Common myeloid progenitor, CD34-positive (primary cell): ENCODE measurements at regions of chr4 and their contacts with region 1.

Region 1: DNA sequence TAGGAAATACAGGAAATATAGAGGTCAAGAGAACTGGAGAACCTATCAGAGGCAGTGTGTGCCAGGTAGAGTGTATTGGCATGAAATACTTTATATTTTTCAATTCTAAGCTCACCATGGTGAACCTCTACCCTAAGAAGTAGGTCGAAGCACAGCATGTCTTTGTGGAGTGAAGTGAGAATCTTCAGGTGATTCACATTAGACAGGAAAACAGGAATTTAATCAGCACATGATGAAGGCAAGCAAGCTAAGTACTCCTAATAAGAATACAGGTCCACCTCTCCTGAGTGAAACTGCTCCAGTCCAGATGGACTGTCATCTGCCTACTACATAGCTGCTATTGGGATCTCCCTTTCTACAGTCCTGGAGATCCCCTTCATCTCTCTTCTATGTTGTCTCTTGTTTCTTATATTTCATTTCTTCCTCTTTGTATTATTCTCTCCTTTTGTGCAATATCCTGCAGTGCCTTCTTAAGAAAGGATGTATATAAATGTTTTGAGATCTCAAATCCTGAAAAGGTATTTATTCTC is 159.0 kb downstream of the LRBA start:
- DNase-seq: no peak
- H3K4me3 ChIP-seq: no peak overlapping the region
- H3K27ac ChIP-seq: no peak overlapping the region
- H3K4me1 ChIP-seq: no peaks in the 10 kb centered on the region
- H3K27me3 ChIP-seq: no peaks in the 10 kb centered on the region

Region 2: DNA sequence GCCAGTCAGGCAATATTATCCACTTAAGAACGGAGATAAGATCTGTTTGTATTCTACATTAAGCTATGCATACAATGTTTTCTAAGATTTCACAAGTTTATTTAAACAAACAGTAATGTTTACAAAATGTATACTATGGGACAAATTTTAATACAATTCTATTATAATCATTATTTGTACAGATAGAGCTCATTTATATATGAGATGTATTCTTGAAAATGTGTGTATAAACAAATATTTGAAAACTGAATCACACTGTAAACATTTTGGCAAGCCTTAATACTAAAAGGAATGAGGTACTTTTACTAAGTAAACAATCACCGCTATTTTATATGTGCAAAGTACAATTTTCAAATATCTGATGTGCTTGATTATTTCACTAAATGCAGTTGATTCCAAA is 393.3 kb before region 1 on chr4:
- CTCF ChIA-PET with region 1: no interaction called
- POLR2A ChIA-PET with region 1: no interaction called
- DNase-seq: no peak
- H3K4me3 ChIP-seq: no peak overlapping the region
- H3K27ac ChIP-seq: no peak overlapping the region
- H3K4me1 ChIP-seq: no peaks in the 10 kb centered on the region
- H3K27me3 ChIP-seq: no peaks in the 10 kb centered on the region

Region 3: DNA sequence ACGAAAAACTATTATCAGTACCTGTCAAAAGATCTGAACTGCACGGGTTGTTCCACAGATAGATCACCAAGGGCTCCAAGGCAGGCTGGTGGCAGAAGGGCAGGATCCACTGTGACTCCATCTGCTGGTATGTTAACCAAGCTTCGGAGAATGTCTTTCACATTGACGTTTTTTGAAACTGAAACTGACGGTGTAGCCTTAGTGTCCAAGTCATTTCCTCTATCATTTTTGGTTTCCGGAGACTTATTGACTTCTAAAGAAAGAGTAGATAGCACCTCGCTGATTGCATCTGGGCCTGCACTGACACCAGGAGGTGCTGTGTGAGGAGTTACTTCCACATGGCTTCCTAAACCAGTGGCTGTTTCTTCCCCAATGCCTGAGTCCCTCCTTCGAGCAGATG is 27.9 kb before region 1 on chr4:
- CTCF ChIA-PET with region 1: no interaction called
- POLR2A ChIA-PET with region 1: no interaction called
- DNase-seq: peak in 2 of 3 donors; percentile 62 to 66
- H3K4me3 ChIP-seq: no peak overlapping the region
- H3K27ac ChIP-seq: no peak overlapping the region
- H3K4me1 ChIP-seq: peaks cover 0 to 23% (median 10%) of the 10 kb centered on the region in 4 experiments
- H3K27me3 ChIP-seq: no peaks in the 10 kb centered on the region

Region 4: DNA sequence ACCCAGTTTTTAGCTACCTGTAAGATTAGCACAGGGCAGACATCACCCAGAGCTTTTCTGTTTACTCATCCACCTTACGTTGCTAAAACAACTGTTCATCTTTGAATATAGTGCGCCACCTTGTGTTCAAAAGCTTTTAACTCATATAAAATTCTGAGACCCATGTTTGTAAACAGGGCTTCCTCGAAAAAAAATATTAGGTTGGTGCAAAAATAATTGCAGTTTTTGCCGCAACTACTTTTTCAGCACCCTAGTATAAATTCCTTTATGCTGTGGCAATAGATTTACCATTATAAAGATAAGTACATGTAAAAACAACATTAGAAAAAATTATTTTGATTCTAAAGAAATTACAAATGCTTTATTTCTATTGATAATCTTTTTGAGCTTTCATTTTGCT is 11.1 kb after region 1 on chr4:
- CTCF ChIA-PET with region 1: interaction called, 15 read pairs
- POLR2A ChIA-PET with region 1: no interaction called
- DNase-seq: peak; percentile 88 to 94 (median 93)
- H3K4me3 ChIP-seq: no peak overlapping the region
- H3K27ac ChIP-seq: no peak overlapping the region
- H3K4me1 ChIP-seq: peaks cover 0 to 1% (median 0%) of the 10 kb centered on the region in 4 experiments
- H3K27me3 ChIP-seq: no peaks in the 10 kb centered on the region